AG04449 (cell line): ENCODE measurements at regions of chr10 and their contacts with region 1.

Region 1: DNA sequence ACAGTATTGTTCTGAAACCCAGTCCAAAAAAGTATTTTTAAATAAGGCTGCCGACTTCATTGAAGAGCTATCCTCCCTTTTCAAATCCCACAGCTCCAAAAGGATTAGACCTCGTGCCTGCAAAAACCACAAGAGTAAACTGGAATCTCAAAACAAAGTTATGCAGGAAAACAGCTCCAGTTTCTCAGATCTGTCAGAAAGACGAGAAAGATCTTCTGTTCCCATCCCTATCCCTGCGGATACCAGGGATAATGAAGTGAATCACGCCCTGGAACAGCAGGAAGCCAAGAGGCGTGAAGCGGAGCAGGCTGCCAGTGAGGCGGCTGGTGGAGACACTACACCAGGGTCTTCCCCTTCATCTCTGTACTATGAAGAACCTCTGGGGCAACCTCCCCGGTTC is 12.6 kb downstream of the MYPN start:
- DNase-seq: no peak
- H3K4me3 ChIP-seq: no peak overlapping the region
- CTCF ChIP-seq: no peak

Region 2: GRCh38 chr10:68106656-68107055 is 15.2 kb before region 1 on chr10:
- CTCF ChIA-PET with region 1: interaction called, 10 read pairs
- POLR2A ChIA-PET with region 1: interaction called, 4 read pairs
- DNase-seq: peak; percentile 89
- H3K4me3 ChIP-seq: peak overlapping the region; percentile 50
- CTCF ChIP-seq: no peak